ENCODE measurements at regions of chr9 and their contacts with region 1.

Region 1: GRCh38 chr9:137502008-137502913 is 43.1 kb upstream of the NSMF start:
- DNase-seq: peak in 1 of 5 donors; percentile 7
- ATAC-seq: no peak
- H3K4me3 ChIP-seq: no peak overlapping the region
- H3K27ac ChIP-seq: no peak overlapping the region
- H3K4me1 ChIP-seq: no peaks in the 10 kb centered on the region
- H3K27me3 ChIP-seq: no peaks in the 10 kb centered on the region
- CTCF ChIP-seq: no peak
- POLR2A ChIP-seq: no peak

Region 2: DNA sequence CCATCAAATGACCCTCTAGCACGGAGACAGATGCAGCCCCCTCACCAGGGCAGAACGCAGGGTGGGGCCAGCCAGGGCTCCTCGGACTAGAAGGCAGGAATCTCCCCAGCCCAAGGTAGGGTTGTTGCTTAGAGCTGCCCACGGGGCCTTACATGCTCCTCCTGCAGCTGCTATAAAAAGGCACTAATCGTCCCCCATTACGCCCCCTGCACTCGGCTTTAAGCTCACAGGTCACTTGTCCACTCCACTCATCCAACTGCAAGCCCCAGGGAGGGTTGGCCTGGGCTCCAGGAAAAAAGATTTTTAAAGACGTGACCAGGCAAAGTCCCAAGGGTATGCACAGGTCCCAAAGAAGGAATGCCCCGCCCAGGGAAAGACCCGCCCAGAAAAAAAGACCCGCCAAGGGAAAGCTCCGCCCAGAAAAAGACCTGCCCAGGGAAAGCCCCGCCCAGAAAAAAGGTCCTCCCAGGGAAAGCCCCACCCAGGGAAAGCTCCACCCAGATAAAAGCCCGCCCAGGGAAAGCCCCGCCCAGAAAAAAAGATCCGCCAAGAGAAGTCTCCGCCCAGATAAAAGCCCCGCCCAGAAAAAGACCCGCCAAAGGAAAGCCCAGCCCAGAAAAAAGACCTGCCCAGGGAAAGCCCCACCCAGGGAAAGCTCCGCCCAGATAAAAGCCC is 352.2 kb before region 1 on chr9:
- intact Hi-C with region 1: loop called in 1 of 10 experiments (anchors 10 kb)
- DNase-seq: no peak
- ATAC-seq: no peak
- H3K4me3 ChIP-seq: no peak overlapping the region
- H3K27ac ChIP-seq: no peak overlapping the region
- H3K4me1 ChIP-seq: no peaks in the 10 kb centered on the region
- H3K27me3 ChIP-seq: peaks cover 0 to 46% (median 11%) of the 10 kb centered on the region in 9 donors
- CTCF ChIP-seq: no peak
- POLR2A ChIP-seq: no peak

Region 3: GRCh38 chr9:137575364-137575715 is 73.1 kb after region 1 on chr9:
- intact Hi-C with region 1: no loop called
- DNase-seq: no peak
- ATAC-seq: peak in 1 of 4 donors; percentile 0
- H3K4me3 ChIP-seq: peak overlapping the region in 1 of 12 donors; percentile 3
- H3K27ac ChIP-seq: peak overlapping the region in 10 of 12 donors; percentile 12 to 74 (median 42)
- H3K4me1 ChIP-seq: peaks cover 7 to 59% (median 40%) of the 10 kb centered on the region in 12 donors
- H3K27me3 ChIP-seq: no peaks in the 10 kb centered on the region
- CTCF ChIP-seq: no peak
- POLR2A ChIP-seq: no peak

Measured in heart left ventricle (tissue), 16 donors.